ENCODE measurements at regions of chr9 and their contacts with region 1.

Region 1: DNA sequence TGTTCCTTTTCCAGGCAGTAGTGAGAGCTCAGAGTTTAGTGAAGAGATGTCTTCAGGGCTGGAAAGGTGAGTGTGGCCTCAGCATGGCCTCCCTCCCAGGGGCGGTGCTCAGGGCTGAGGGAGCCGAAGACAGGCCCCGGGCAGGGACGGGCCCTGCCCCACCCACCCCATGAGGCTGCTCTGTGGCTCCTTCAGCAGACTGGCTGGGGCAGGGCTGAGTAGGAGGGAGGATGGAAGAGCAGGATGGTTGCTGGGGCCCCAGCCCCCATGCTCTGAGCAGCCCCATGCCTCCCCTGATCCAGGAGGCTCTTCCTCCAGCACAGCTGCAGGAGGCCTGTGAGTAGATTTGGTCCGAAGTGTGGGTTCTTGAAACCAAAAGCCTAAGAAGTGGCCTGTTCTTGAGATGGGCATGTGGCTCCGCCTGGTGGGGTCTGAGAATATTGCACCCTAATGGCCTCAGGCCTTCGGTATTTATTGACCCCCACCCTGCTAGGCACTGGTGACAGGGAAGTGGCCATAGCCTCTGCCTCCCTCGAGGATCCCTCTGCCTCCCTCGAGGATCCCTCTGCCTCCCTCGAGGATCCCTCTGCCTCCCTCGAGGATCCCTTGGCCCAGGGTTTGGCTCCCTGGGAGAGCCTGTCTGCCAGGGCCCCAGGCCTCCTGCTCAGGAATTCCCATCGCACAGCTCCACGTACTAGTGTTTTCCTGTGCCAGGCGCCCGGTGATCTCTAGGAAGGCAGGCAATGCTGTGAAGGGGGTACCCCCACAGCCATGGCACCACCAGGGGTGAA is 65.4 kb upstream of the GARNL3 start:
- DNase-seq: peak; percentile 68
- H3K4me3 Mint-ChIP-seq: no peak overlapping the region
- H3K27ac Mint-ChIP-seq: no peak overlapping the region
- H3K4me1 Mint-ChIP-seq: peaks cover 5% of the 10 kb centered on the region
- H3K27me3 Mint-ChIP-seq: peaks cover 8% of the 10 kb centered on the region

Region 2: DNA sequence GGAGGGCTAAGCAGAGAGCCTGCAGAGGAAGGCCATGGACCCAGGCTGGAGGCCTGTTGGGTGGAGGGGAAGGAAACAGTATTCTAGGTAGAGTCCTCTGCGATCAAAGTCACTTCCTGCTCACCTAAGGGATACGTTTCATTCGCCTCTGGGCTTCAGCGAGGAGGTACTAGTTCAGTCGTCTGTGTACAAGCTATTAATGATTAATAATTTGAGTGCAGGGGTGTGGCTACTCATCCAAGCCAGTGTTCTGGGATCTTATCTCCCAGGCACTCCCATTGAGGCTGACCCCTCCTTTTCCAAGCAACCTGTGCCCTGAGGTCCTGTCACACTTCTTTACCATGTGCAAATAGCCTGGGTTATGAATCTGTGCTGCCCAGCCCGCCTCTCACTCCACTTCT is 259.4 kb before region 1 on chr9:
- intact Hi-C with region 1: loop called (anchors 1 kb)
- DNase-seq: no peak
- H3K4me3 Mint-ChIP-seq: no peak overlapping the region
- H3K27ac Mint-ChIP-seq: no peak overlapping the region
- H3K4me1 Mint-ChIP-seq: peaks cover 4% of the 10 kb centered on the region
- H3K27me3 Mint-ChIP-seq: peaks cover 39% of the 10 kb centered on the region

Region 3: GRCh38 chr9:126965541-126966428 is 233.4 kb before region 1 on chr9:
- intact Hi-C with region 1: loop called (anchors 1 kb)
- DNase-seq: no peak
- H3K4me3 Mint-ChIP-seq: no peak overlapping the region
- H3K27ac Mint-ChIP-seq: no peak overlapping the region
- H3K4me1 Mint-ChIP-seq: no peaks in the 10 kb centered on the region
- H3K27me3 Mint-ChIP-seq: peaks cover 29% of the 10 kb centered on the region